ENCODE measurements at regions of chr6 and their contacts with region 1.

Region 1: GRCh38 chr6:166456395-166457156 is 73.8 kb upstream of the MPC1 start:
- DNase-seq: peak; percentile 17
- ATAC-seq: peak; percentile 56
- H3K4me3 ChIP-seq: no peak overlapping the region
- H3K27ac ChIP-seq: no peak overlapping the region
- H3K4me1 ChIP-seq: no peaks in the 10 kb centered on the region
- H3K27me3 ChIP-seq: no peaks in the 10 kb centered on the region
- CTCF ChIP-seq: peak; percentile 32 to 49 (median 48); a peak in 4 of 6 replicates
- EP300 ChIP-seq: no peak
- POLR2A ChIP-seq: no peak
- RAD21 ChIP-seq: peak; percentile 54

Region 2: DNA sequence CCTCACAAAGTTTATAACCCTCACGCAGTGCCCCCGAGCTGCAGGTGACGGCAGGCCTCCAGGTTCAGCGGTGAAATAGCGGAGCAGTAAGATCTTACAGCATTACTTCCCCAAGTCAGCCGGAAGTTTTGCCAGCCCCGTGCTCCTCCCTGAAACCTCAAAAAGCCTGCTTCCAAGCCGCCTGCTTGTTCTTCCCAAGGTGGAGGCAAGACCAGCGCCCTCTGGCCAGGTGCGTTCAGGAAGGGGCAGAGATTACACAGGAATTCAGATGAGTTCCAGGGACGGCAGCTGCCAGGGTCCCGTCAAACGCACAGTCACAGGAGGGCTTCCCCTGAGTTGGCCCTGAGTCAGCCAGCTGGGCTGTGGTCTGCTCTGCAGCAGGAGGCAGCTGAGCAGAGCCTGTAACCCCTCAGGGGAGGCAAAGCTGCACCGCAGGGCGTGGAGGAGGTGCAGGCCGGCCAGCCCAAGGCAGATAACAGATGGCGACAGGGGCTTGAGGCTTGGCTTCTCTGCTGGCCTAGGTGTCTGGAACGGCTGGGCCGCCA is 294.5 kb after region 1 on chr6:
- CTCF ChIA-PET with region 1: no interaction called
- POLR2A ChIA-PET with region 1: no interaction called
- RAD21 ChIA-PET with region 1: no interaction called
- SMC1A ChIA-PET with region 1: no interaction called
- in situ Hi-C with region 1: no loop called
- intact Hi-C with region 1: loop called (anchors 10 kb)
- DNase-seq: no peak
- ATAC-seq: peak; percentile 69
- H3K4me3 ChIP-seq: no peak overlapping the region
- H3K27ac ChIP-seq: no peak overlapping the region
- H3K4me1 ChIP-seq: peaks cover 9% of the 10 kb centered on the region; the same call in 1 of the 2 replicates
- H3K27me3 ChIP-seq: no peaks in the 10 kb centered on the region; a peak in 1 of 4 replicates
- CTCF ChIP-seq: no peak
- EP300 ChIP-seq: no peak
- POLR2A ChIP-seq: no peak
- RAD21 ChIP-seq: no peak

Region 3: DNA sequence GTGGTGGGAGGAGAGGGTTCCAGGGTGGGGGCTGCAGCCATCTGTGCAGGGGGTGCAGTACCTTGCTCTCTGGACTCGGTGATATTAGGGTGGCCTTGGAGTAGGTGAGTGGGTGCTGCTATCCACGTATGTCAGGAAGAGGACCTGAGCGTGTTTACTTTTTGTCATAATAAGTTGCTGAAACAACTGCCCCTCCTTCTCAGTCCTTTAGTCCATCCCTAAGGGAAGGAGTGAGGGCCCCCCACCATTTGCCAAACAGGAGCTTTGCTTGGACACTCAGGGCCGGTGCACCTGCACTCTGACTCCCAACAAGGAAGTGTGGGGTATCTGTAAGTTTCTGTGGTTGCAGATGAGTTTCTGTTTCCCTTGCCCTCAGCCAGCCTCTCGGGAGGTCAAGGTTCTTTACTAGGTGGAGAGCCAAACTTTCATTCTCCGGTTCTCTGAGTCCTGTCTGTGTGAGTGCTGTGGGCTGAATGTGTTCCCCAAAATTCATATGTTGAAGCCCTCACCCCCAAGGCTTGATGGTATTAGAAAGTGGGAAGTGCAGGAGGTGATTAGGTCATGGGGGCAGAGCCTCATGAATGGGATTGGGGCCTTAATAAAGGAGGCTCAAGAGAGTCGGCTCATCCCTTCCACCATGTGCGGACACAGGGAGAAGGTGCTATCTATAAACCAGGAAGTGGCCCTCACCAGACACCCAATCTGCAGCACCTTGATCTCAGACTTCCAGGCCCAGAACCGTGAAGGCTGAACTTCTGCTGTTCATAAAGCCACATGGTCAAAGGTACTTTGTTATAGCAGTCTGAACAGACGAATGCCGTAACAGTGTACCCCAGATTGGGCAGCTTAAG is 646.7 kb after region 1 on chr6:
- CTCF ChIA-PET with region 1: no interaction called
- POLR2A ChIA-PET with region 1: no interaction called
- RAD21 ChIA-PET with region 1: no interaction called
- SMC1A ChIA-PET with region 1: no interaction called
- in situ Hi-C with region 1: no loop called
- intact Hi-C with region 1: no loop called
- DNase-seq: no peak
- ATAC-seq: peak; percentile 92
- H3K4me3 ChIP-seq: no peak overlapping the region
- H3K27ac ChIP-seq: peak overlapping the region; percentile 60
- H3K4me1 ChIP-seq: peaks cover 31% of the 10 kb centered on the region
- H3K27me3 ChIP-seq: no peaks in the 10 kb centered on the region
- CTCF ChIP-seq: no peak
- EP300 ChIP-seq: peak; percentile 34 to 56; a peak in 2 of 4 replicates
- POLR2A ChIP-seq: no peak
- RAD21 ChIP-seq: no peak

Measured in GM12878 (cell line).